ENCODE measurements at regions of chr13 and their contacts with region 1.

Region 1: GRCh38 chr13:36736119-36736726 is 62.4 kb downstream of the SERTM1 start:
- DNase-seq: peak; percentile 19
- H3K4me3 ChIP-seq: no peak overlapping the region
- H3K27ac ChIP-seq: no peak overlapping the region
- H3K4me1 ChIP-seq: no peaks in the 10 kb centered on the region
- H3K27me3 ChIP-seq: no peaks in the 10 kb centered on the region
- CTCF ChIP-seq: peak; percentile 60 to 74 (median 67)
- EP300 ChIP-seq: no peak
- POLR2A ChIP-seq: no peak

Region 2: GRCh38 chr13:35953537-35954206 is 782.6 kb before region 1 on chr13:
- in situ Hi-C with region 1: loop called in 1 of 4 experiments (anchors 25 kb)
- intact Hi-C with region 1: no loop called
- DNase-seq: peak; percentile 49
- H3K4me3 ChIP-seq: no peak overlapping the region
- H3K27ac ChIP-seq: peak overlapping the region in 2 of 4 donors; percentile 13 to 14
- H3K4me1 ChIP-seq: peaks cover 0 to 9% (median 0%) of the 10 kb centered on the region in 4 donors
- H3K27me3 ChIP-seq: no peaks in the 10 kb centered on the region
- CTCF ChIP-seq: peak; percentile 13 to 45 (median 31)
- EP300 ChIP-seq: no peak
- POLR2A ChIP-seq: no peak

Region 3: DNA sequence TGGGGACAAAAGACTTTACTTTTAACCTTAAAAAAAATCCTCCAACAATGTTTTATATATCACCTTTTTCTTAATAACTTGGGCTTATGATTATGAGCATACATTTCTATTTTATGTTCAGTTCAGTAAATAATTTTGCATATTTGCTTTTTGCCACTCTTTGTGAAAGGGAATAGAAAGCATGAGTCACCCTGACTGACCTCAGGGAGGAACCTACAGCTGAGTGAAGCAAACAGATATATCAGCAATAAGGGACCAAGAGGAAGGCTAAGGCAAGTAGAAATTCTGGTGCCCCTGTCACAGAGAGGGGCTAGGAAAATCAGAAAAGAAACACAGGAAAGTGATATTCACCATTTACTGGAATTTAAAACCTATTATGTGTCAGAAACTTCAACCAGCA is 484.7 kb before region 1 on chr13:
- in situ Hi-C with region 1: loop called in 1 of 4 experiments (anchors 25 kb)
- intact Hi-C with region 1: no loop called
- DNase-seq: no peak
- H3K4me3 ChIP-seq: no peak overlapping the region
- H3K27ac ChIP-seq: no peak overlapping the region
- H3K4me1 ChIP-seq: no peaks in the 10 kb centered on the region
- H3K27me3 ChIP-seq: no peaks in the 10 kb centered on the region
- CTCF ChIP-seq: no peak
- EP300 ChIP-seq: no peak
- POLR2A ChIP-seq: no peak

Region 4: GRCh38 chr13:36297366-36298338 is 438.6 kb before region 1 on chr13 and contains the start of gene CCDC169:
- in situ Hi-C with region 1: loop called in 1 of 4 experiments (anchors 25 kb)
- intact Hi-C with region 1: no loop called
- DNase-seq: peak; percentile 73
- H3K4me3 ChIP-seq: peak within 1 kb of the TSS; percentile 20 to 66 (median 49)
- H3K27ac ChIP-seq: peak within 1 kb of the TSS; percentile 65 to 81 (median 73)
- H3K4me1 ChIP-seq: peaks cover 0 to 16% (median 3%) of the 10 kb centered on the region in 4 donors
- H3K27me3 ChIP-seq: peaks cover 11% of the 10 kb centered on the region
- CTCF ChIP-seq: no peak
- EP300 ChIP-seq: no peak
- POLR2A ChIP-seq: no peak
- total RNA-seq, gene CCDC169: 0.48 to 0.55 TPM in 2 of 4 donors, not detected in the others

Region 5: GRCh38 chr13:36420437-36420891 is 315.8 kb before region 1 on chr13:
- in situ Hi-C with region 1: loop called in 3 of 4 experiments (anchors 25 kb)
- intact Hi-C with region 1: loop called (anchors 10 kb)
- DNase-seq: peak; percentile 57
- H3K4me3 ChIP-seq: no peak overlapping the region
- H3K27ac ChIP-seq: no peak overlapping the region
- H3K4me1 ChIP-seq: peaks cover 0 to 3% (median 0%) of the 10 kb centered on the region in 4 donors
- H3K27me3 ChIP-seq: no peaks in the 10 kb centered on the region
- CTCF ChIP-seq: peak; percentile 52 to 83 (median 77)
- EP300 ChIP-seq: no peak
- POLR2A ChIP-seq: no peak

Region 6: GRCh38 chr13:36530050-36530789 is 206.0 kb before region 1 on chr13:
- in situ Hi-C with region 1: no loop called
- intact Hi-C with region 1: no loop called
- DNase-seq: no peak
- H3K4me3 ChIP-seq: no peak overlapping the region
- H3K27ac ChIP-seq: no peak overlapping the region
- H3K4me1 ChIP-seq: no peaks in the 10 kb centered on the region
- H3K27me3 ChIP-seq: no peaks in the 10 kb centered on the region
- CTCF ChIP-seq: no peak
- EP300 ChIP-seq: no peak
- POLR2A ChIP-seq: no peak